Activated B cell treated with CpG ODN at 0.5 μM for 24 hours (primary cell): ENCODE measurements at regions of chr1 and their contacts with region 1.

Region 1: DNA sequence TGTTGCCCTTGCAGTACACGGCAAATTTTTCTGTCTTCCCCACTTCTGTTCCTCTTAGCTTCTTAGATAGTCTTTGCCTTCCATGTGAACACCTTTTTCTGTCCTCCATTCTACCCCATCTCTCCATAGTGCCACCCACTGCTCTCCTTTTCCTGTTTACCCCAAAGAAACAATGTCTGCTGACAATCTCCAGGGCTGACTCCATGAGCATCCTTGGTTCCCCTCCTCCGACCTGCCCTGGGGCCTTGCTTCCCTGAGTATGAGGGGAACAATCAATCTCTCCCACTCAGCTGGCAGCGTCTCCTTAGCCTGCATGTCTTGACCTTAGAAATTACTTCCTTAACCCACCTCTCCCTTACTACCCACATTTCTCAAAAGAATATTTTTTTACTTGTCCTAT is 12.3 kb upstream of the MYBPHL start:
- DNase-seq: no peak
- ATAC-seq: no peak
- H3K4me3 Mint-ChIP-seq: no peak overlapping the region
- H3K27ac Mint-ChIP-seq: no peak overlapping the region
- H3K4me1 Mint-ChIP-seq: no peaks in the 10 kb centered on the region
- H3K27me3 Mint-ChIP-seq: peaks cover 19% of the 10 kb centered on the region
- CTCF ChIP-seq: no peak

Region 2: GRCh38 chr1:109050266-109050995 is 268.7 kb before region 1 on chr1:
- CTCF ChIA-PET with region 1: no interaction called
- POLR2A ChIA-PET with region 1: no interaction called
- intact Hi-C with region 1: no loop called
- DNase-seq: no peak
- ATAC-seq: no peak
- H3K4me3 Mint-ChIP-seq: no peak overlapping the region
- H3K27ac Mint-ChIP-seq: no peak overlapping the region
- H3K4me1 Mint-ChIP-seq: no peaks in the 10 kb centered on the region
- H3K27me3 Mint-ChIP-seq: no peaks in the 10 kb centered on the region
- CTCF ChIP-seq: no peak

Region 3: DNA sequence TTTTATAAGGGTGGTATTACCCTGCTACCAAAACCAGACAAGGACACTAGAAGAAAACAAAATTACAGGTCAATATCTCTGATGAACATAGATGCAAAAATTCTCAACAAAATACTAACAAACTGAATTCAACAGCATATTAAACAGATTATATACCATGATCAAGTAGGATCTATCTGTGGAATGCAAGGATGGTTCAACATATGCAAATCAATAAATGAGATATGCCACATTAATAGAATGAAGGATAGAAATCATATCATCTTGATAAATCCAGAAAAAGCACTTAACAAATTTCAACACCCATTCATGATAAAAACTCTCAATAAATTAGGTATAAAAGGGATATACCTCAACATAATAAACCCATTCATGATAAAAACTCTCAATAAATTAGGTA is 12.0 kb after region 1 on chr1:
- CTCF ChIA-PET with region 1: no interaction called
- POLR2A ChIA-PET with region 1: interaction called, 5 read pairs
- intact Hi-C with region 1: loop called (anchors 1 kb)
- DNase-seq: no peak
- ATAC-seq: no peak
- H3K4me3 Mint-ChIP-seq: no peak overlapping the region
- H3K27ac Mint-ChIP-seq: no peak overlapping the region
- H3K4me1 Mint-ChIP-seq: no peaks in the 10 kb centered on the region
- H3K27me3 Mint-ChIP-seq: peaks cover 6% of the 10 kb centered on the region
- CTCF ChIP-seq: no peak